Heart right ventricle (tissue), 16 donors: ENCODE measurements at regions of chr1 and their contacts with region 1.

Region 1: GRCh38 chr1:153510984-153511410 is 24.8 kb downstream of the S100A6 start:
- DNase-seq: peak; percentile 80 to 85
- ATAC-seq: peak; percentile 41 to 73 (median 64)
- H3K4me3 ChIP-seq: no peak overlapping the region
- H3K27ac ChIP-seq: no peak overlapping the region
- H3K4me1 ChIP-seq: peaks cover 9 to 38% (median 21%) of the 10 kb centered on the region in 9 donors
- H3K27me3 ChIP-seq: no peaks in the 10 kb centered on the region
- CTCF ChIP-seq: peak; percentile 82 to 99 (median 95)

Region 2: GRCh38 chr1:153617675-153618074 is 106.7 kb after region 1 on chr1:
- intact Hi-C with region 1: loop called in 3 of 10 experiments (anchors 5 kb)
- DNase-seq: peak; percentile 77 to 84
- ATAC-seq: peak in 7 of 8 donors; percentile 37 to 87 (median 71)
- H3K4me3 ChIP-seq: no peak overlapping the region
- H3K27ac ChIP-seq: peak overlapping the region in 6 of 10 donors; percentile 14 to 70 (median 59)
- H3K4me1 ChIP-seq: peaks cover 5 to 30% (median 21%) of the 10 kb centered on the region in 9 donors
- H3K27me3 ChIP-seq: no peaks in the 10 kb centered on the region
- CTCF ChIP-seq: peak in 8 of 9 donors; percentile 40 to 92 (median 66)

Region 3: GRCh38 chr1:153670859-153671627 is 160.0 kb after region 1 on chr1 and contains the start of gene ILF2:
- intact Hi-C with region 1: loop called in 2 of 10 experiments (anchors 1 to 5 kb)
- DNase-seq: peak; percentile 97 to 99
- ATAC-seq: peak; percentile 95 to 98 (median 97)
- H3K4me3 ChIP-seq: peak within 1 kb of the TSS; percentile 55 to 98 (median 80)
- H3K27ac ChIP-seq: peak within 1 kb of the TSS; percentile 21 to 92 (median 85)
- H3K4me1 ChIP-seq: peaks cover 0 to 30% (median 19%) of the 10 kb centered on the region in 9 donors
- H3K27me3 ChIP-seq: no peaks in the 10 kb centered on the region
- CTCF ChIP-seq: peak in 6 of 9 donors; percentile 19 to 50 (median 31)
- total RNA-seq, gene ILF2: 61.1 to 87.3 (median 70.8) TPM

Region 4: GRCh38 chr1:153677718-153678505 is 166.9 kb after region 1 on chr1:
- intact Hi-C with region 1: loop called in 1 of 10 experiments (anchors 5 kb)
- DNase-seq: peak; percentile 40 to 54
- ATAC-seq: peak; percentile 52 to 87 (median 76)
- H3K4me3 ChIP-seq: peak overlapping the region; percentile 48 to 73 (median 66)
- H3K27ac ChIP-seq: peak overlapping the region; percentile 44 to 85 (median 78)
- H3K4me1 ChIP-seq: peaks cover 8 to 28% (median 22%) of the 10 kb centered on the region in 9 donors
- H3K27me3 ChIP-seq: peaks cover 9 to 41% (median 19%) of the 10 kb centered on the region in 7 donors
- CTCF ChIP-seq: peak; percentile 79 to 96 (median 93)

Region 5: GRCh38 chr1:153775458-153776327 is 264.7 kb after region 1 on chr1:
- intact Hi-C with region 1: loop called in 1 of 10 experiments (anchors 5 kb)
- DNase-seq: peak; percentile 71 to 73
- ATAC-seq: peak; percentile 23 to 46 (median 36)
- H3K4me3 ChIP-seq: peak overlapping the region; percentile 54 to 94 (median 85)
- H3K27ac ChIP-seq: peak overlapping the region; percentile 72 to 92 (median 86)
- H3K4me1 ChIP-seq: peaks cover 27 to 92% (median 76%) of the 10 kb centered on the region in 9 donors
- H3K27me3 ChIP-seq: no peaks in the 10 kb centered on the region
- CTCF ChIP-seq: peak in 1 of 9 donors; percentile 7